Keratinocyte (primary cell): ENCODE measurements at regions of chr7 and their contacts with region 1.

Region 1: GRCh38 chr7:29105752-29106668 is 40.3 kb downstream of the CPVL start:
- DNase-seq: no peak
- H3K4me3 ChIP-seq: no peak overlapping the region
- H3K27ac ChIP-seq: no peak overlapping the region
- H3K4me1 ChIP-seq: peaks cover 25% of the 10 kb centered on the region
- H3K27me3 ChIP-seq: no peaks in the 10 kb centered on the region
- CTCF ChIP-seq: peak; percentile 73 to 92 (median 89)

Region 2: DNA sequence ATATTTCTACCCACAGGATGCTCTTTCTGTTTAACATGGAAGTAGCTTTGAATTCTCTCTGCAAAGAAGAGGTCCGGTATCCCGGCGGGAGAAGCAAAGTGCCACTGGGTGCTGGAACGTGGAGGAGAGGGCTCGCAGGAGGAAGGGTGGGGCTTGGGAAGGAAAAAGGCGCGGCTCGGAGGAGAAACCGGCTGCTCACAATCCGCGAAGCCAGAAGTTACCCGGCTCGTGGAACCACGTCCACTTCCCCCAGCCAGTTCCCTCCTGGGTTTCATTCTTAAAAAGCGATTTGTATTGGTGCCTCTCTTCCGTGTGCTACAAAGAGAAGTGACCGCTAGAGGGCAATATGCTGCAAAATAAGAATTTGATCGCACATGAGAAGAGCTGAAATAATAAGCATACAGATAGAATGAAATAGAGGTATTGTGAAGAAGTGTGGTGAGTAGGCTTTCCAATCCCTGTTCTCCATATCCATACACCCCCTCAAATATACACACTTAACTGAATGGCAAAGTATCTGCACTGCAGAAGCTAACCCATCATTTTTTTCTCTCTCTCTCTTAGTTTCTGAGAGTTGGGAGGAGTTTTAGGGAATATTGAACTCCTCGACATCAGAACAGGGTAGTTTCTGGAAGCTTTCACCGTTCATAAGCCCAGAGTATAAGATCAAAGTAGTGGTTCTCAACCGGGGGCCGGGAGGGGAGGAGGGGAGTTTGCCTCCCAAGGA is 179.0 kb before region 1 on chr7:
- dilution Hi-C with region 1: loop called (anchors 25 kb)
- DNase-seq: peak; percentile 15
- H3K4me3 ChIP-seq: peak overlapping the region; percentile 28 to 83 (median 75)
- H3K27ac ChIP-seq: peak overlapping the region; percentile 13
- H3K4me1 ChIP-seq: peaks cover 8% of the 10 kb centered on the region
- H3K27me3 ChIP-seq: no peaks in the 10 kb centered on the region
- CTCF ChIP-seq: peak; percentile 40 to 83 (median 59)